ENCODE measurements at regions of chrX and their contacts with region 1.

Region 1: GRCh38 chrX:119871599-119872395 is at the starts of genes NDUFA1 and RNF113A:
- DNase-seq: peak; percentile 89
- H3K4me3 Mint-ChIP-seq: peak within 1 kb of the TSS; percentile 95
- H3K27ac Mint-ChIP-seq: peak within 1 kb of the TSS; percentile 99
- H3K4me1 Mint-ChIP-seq: peaks cover 21% of the 10 kb centered on the region
- H3K27me3 Mint-ChIP-seq: no peaks in the 10 kb centered on the region
- total RNA-seq, gene NDUFA1: 104 to 108 TPM
- total RNA-seq, gene RNF113A: 33.0 to 36.2 TPM

Region 2: DNA sequence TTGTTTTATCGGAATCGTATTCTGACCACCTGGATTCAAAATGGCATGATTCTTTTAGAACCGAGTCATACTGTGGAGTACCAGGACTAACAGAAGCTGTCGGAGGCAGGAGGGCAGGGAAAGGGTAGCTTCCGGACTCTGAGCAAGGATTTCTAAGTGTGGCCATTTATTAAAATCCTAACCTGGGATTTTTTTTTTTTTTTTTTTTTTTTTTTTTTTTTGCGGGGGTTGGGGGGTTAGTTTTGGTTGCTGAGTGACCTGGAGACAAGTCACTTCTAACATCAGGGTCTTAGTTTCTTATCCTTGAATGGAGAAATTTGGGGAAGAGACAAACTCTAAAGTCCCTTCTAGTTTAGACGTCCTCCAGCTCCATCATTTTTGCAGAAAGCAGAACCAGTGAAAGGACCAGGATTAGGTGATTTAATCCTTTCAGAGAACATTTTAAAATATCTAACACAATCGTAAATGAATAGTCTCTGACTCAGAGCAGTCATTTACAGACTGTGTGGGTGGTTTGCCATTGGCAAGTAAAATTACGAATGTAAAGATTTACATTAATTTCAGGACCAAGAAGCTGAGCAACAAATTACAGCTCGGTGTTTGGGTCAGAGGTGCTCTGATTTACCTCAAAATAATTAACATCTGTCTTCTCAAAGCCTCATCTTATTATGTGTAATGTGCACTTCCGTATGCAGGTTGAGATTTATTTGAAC is 396.3 kb before region 1 on chrX:
- CTCF ChIA-PET with region 1: no interaction called
- POLR2A ChIA-PET with region 1: no interaction called
- DNase-seq: no peak
- H3K4me3 Mint-ChIP-seq: no peak overlapping the region
- H3K27ac Mint-ChIP-seq: no peak overlapping the region
- H3K4me1 Mint-ChIP-seq: peaks cover 3% of the 10 kb centered on the region
- H3K27me3 Mint-ChIP-seq: peaks cover 11% of the 10 kb centered on the region

Region 3: GRCh38 chrX:119826399-119826959 is 45.3 kb before region 1 on chrX:
- CTCF ChIA-PET with region 1: no interaction called
- POLR2A ChIA-PET with region 1: interaction called, 11 read pairs
- DNase-seq: no peak
- H3K4me3 Mint-ChIP-seq: no peak overlapping the region
- H3K27ac Mint-ChIP-seq: no peak overlapping the region
- H3K4me1 Mint-ChIP-seq: peaks cover 20% of the 10 kb centered on the region
- H3K27me3 Mint-ChIP-seq: no peaks in the 10 kb centered on the region

Region 4: GRCh38 chrX:119852382-119853353 is 19.1 kb before region 1 on chrX and contains the start of gene UPF3B:
- CTCF ChIA-PET with region 1: interaction called, 6 read pairs
- POLR2A ChIA-PET with region 1: interaction called, 32 read pairs
- DNase-seq: peak; percentile 95
- H3K4me3 Mint-ChIP-seq: peak within 1 kb of the TSS; percentile 99
- H3K27ac Mint-ChIP-seq: peak within 1 kb of the TSS; percentile 91
- H3K4me1 Mint-ChIP-seq: peaks cover 33% of the 10 kb centered on the region
- H3K27me3 Mint-ChIP-seq: peaks cover 5% of the 10 kb centered on the region
- total RNA-seq, gene UPF3B: 9.4 to 11.2 TPM

Measured in activated CD4-positive, alpha-beta memory T cell treated with anti-CD3 and anti-CD28 coated beads, Interleukin-2, amount 10 ng/mL, durations not matched to agents 7 days and 5 days (primary cell).